Aorta (tissue), 5 donors: ENCODE measurements at regions of chr5 and their contacts with region 1.

Region 1: GRCh38 chr5:1942158-1942557 is 59.4 kb upstream of the IRX4 start:
- DNase-seq: no peak
- ATAC-seq: no peak
- H3K4me3 ChIP-seq: no peak overlapping the region
- H3K27ac ChIP-seq: no peak overlapping the region
- H3K4me1 ChIP-seq: no peaks in the 10 kb centered on the region
- H3K27me3 ChIP-seq: no peaks in the 10 kb centered on the region

Region 2: DNA sequence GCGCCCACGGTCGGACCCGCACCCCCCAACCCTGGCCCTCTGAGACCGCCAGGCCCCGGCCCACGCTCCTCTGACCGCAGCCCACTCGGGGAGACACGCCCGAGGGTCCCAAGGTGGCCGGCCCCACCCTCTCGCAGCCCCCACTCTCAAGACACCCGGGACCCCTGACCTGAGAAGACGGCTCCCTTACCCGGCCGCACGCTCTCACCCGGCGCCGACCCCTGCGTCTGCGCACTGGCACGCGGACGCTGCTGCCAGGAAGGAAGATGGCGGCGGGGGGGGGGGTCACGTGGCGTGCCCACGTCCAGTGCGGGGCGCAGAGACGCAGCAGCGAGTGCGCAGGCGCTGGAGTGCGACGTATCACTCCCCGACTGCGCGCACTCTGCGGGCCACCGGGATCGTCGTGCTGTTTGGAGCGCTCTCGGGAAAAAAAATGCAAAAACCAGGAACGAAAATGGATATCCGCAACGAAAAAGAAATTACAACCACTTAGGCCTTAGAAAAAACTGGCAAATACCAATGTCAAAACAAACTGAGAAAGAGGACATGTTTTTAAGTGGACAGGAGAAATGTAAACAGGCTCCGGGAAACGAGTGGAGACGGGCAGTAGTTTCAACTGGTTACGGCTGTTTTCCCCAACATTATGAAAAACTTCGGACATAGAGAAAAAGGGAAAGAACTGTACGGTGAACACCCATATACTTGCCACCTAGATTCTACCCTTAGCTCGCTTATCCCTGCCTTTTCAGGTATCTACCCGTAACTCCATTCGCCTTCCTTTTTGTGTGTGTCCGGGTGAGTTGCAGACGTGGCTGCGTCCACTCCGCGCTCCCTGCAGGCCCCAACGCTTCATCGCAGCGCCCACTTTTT is 142.3 kb before region 1 on chr5 and contains the start of gene MRPL36:
- intact Hi-C with region 1: no loop called
- DNase-seq: peak; percentile 95 to 96
- ATAC-seq: peak; percentile 96
- H3K4me3 ChIP-seq: peak within 1 kb of the TSS; percentile 64 to 75
- H3K27ac ChIP-seq: peak within 1 kb of the TSS in 1 of 2 donors; percentile 30
- H3K4me1 ChIP-seq: no peaks in the 10 kb centered on the region
- H3K27me3 ChIP-seq: no peaks in the 10 kb centered on the region
- total RNA-seq, gene MRPL36: 25.1 to 28.5 TPM

Region 3: GRCh38 chr5:1883120-1883924 is 58.8 kb before region 1 on chr5:
- intact Hi-C with region 1: no loop called
- DNase-seq: peak; percentile 17 to 77
- ATAC-seq: no peak
- H3K4me3 ChIP-seq: peak overlapping the region in 1 of 2 donors; percentile 1
- H3K27ac ChIP-seq: no peak overlapping the region
- H3K4me1 ChIP-seq: no peaks in the 10 kb centered on the region
- H3K27me3 ChIP-seq: no peaks in the 10 kb centered on the region

Region 4: GRCh38 chr5:1901061-1901460 is 41.1 kb before region 1 on chr5:
- intact Hi-C with region 1: loop called in 1 of 2 experiments (anchors 1 kb)
- DNase-seq: no peak
- ATAC-seq: no peak
- H3K4me3 ChIP-seq: no peak overlapping the region
- H3K27ac ChIP-seq: no peak overlapping the region
- H3K4me1 ChIP-seq: no peaks in the 10 kb centered on the region
- H3K27me3 ChIP-seq: no peaks in the 10 kb centered on the region